ENCODE measurements at regions of chr5 and their contacts with region 1.

Region 1: DNA sequence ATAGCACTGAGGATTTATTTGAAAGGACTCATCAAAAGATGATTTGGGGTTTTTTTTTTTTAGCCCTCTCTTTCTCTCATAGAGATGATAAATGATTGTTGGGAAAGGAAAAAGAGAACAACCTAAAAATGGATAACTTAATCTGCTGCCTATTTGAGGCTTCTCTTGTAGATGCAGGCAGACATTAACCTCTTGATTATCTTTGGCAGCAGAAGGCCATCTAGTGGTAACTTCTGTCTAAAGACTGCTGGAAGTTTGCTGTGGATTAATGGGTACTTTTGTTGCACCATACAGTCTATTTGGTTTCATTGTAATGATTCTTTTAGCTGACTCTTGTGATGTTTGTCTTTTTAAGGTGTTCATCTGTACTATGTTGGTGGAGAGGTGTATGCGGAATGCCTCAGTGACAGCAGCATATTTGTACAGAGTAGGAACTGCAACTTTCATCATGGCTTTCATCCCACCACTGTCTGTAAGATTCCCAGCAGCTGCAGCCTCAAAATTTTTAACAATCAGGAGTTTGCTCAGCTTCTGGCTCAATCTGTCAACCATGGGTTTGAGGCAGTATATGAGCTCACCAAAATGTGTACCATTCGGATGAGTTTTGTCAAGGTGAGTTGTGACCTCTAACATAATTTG is 18.8 kb downstream of the SMIM32 start:
- DNase-seq: peak; percentile 12
- ATAC-seq: peak; percentile 88
- H3K4me3 ChIP-seq: no peak overlapping the region
- H3K27ac ChIP-seq: no peak overlapping the region
- H3K4me1 ChIP-seq: no peaks in the 10 kb centered on the region
- H3K27me3 ChIP-seq: no peaks in the 10 kb centered on the region
- CTCF ChIP-seq: peak; percentile 67 to 74 (median 70)
- EP300 ChIP-seq: no peak
- POLR2A ChIP-seq: no peak
- RAD21 ChIP-seq: peak; percentile 81

Region 2: GRCh38 chr5:135591277-135591676 is 582.9 kb before region 1 on chr5:
- CTCF ChIA-PET with region 1: no interaction called
- POLR2A ChIA-PET with region 1: no interaction called
- RAD21 ChIA-PET with region 1: no interaction called
- SMC1A ChIA-PET with region 1: no interaction called
- in situ Hi-C with region 1: no loop called
- intact Hi-C with region 1: no loop called
- DNase-seq: no peak
- ATAC-seq: no peak
- H3K4me3 ChIP-seq: no peak overlapping the region
- H3K27ac ChIP-seq: no peak overlapping the region
- H3K4me1 ChIP-seq: 0 out of 2 replicates have a peak, but pooled peaks cover 3% of the 10 kb centered on the region
- H3K27me3 ChIP-seq: peaks cover 2 to 6% of the 10 kb centered on the region in 2 experiments; a peak in 3 of 4 replicates
- CTCF ChIP-seq: no peak
- EP300 ChIP-seq: no peak
- POLR2A ChIP-seq: no peak
- RAD21 ChIP-seq: no peak

Region 3: GRCh38 chr5:135887351-135887864 is 286.7 kb before region 1 on chr5:
- CTCF ChIA-PET with region 1: interaction called, 5 read pairs
- POLR2A ChIA-PET with region 1: no interaction called
- RAD21 ChIA-PET with region 1: no interaction called
- SMC1A ChIA-PET with region 1: no interaction called
- in situ Hi-C with region 1: no loop called
- intact Hi-C with region 1: loop called (anchors 2 kb)
- DNase-seq: peak; percentile 25
- ATAC-seq: peak; percentile 98
- H3K4me3 ChIP-seq: no peak overlapping the region
- H3K27ac ChIP-seq: no peak overlapping the region
- H3K4me1 ChIP-seq: no peaks in the 10 kb centered on the region
- H3K27me3 ChIP-seq: no peaks in the 10 kb centered on the region
- CTCF ChIP-seq: peak; percentile 72 to 78 (median 74)
- EP300 ChIP-seq: no peak
- POLR2A ChIP-seq: no peak
- RAD21 ChIP-seq: peak; percentile 85

Region 4: GRCh38 chr5:135944967-135945560 is 229.1 kb before region 1 on chr5:
- CTCF ChIA-PET with region 1: interaction called, 6 read pairs
- POLR2A ChIA-PET with region 1: no interaction called
- RAD21 ChIA-PET with region 1: interaction called, 4 read pairs
- SMC1A ChIA-PET with region 1: interaction called, 5 read pairs
- in situ Hi-C with region 1: no loop called
- intact Hi-C with region 1: loop called (anchors 2 kb)
- DNase-seq: no peak
- ATAC-seq: peak; percentile 70
- H3K4me3 ChIP-seq: no peak overlapping the region
- H3K27ac ChIP-seq: no peak overlapping the region
- H3K4me1 ChIP-seq: no peaks in the 10 kb centered on the region
- H3K27me3 ChIP-seq: no peaks in the 10 kb centered on the region; a peak in 2 of 4 replicates
- CTCF ChIP-seq: peak; percentile 60 to 77 (median 66)
- EP300 ChIP-seq: no peak
- POLR2A ChIP-seq: no peak
- RAD21 ChIP-seq: peak; percentile 74

Region 5: DNA sequence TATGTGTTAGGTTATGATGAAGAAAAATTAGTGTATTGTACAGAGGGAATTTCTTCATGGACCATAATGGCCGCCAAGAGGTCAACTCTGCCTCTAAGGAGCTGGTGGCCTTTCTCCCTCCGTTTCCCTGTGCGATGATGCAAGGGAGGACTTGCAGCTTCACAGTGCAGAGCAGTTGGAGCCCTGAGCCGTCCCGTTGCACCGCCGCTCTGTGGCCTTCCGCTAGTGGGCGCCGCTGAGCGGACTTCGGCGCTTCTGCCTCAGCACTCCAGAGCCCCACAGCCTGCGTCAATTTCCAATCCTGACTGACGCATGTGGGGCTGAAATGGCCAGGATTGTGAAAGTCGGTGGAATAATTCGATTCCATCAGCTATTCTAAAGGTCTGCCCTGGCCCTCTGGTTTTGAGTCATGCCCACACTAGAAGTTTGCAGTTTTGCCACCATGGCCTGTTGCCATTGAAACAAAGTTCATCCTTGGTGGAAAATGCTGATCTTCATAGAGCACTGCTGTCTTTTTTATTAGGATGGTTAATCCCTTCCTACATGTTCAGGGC is 196.7 kb before region 1 on chr5:
- CTCF ChIA-PET with region 1: interaction called, 13 read pairs
- POLR2A ChIA-PET with region 1: no interaction called
- RAD21 ChIA-PET with region 1: interaction called, 3 read pairs
- SMC1A ChIA-PET with region 1: interaction called, 3 read pairs
- in situ Hi-C with region 1: no loop called
- intact Hi-C with region 1: loop called (anchors 10 kb)
- DNase-seq: no peak
- ATAC-seq: peak; percentile 99
- H3K4me3 ChIP-seq: no peak overlapping the region
- H3K27ac ChIP-seq: no peak overlapping the region
- H3K4me1 ChIP-seq: no peaks in the 10 kb centered on the region
- H3K27me3 ChIP-seq: peaks cover 0 to 3% of the 10 kb centered on the region in 2 experiments; a peak in 2 of 4 replicates
- CTCF ChIP-seq: peak; percentile 71 to 94 (median 88)
- EP300 ChIP-seq: no peak
- POLR2A ChIP-seq: no peak
- RAD21 ChIP-seq: peak; percentile 58

Region 6: GRCh38 chr5:136073714-136074529 is 100.2 kb before region 1 on chr5:
- CTCF ChIA-PET with region 1: interaction called, 64 read pairs
- POLR2A ChIA-PET with region 1: no interaction called
- RAD21 ChIA-PET with region 1: interaction called, 5 read pairs
- SMC1A ChIA-PET with region 1: interaction called, 5 read pairs
- in situ Hi-C with region 1: no loop called
- intact Hi-C with region 1: no loop called
- DNase-seq: no peak
- ATAC-seq: peak; percentile 86
- H3K4me3 ChIP-seq: no peak overlapping the region
- H3K27ac ChIP-seq: no peak overlapping the region
- H3K4me1 ChIP-seq: no peaks in the 10 kb centered on the region; the same call in 1 of the 2 replicates
- H3K27me3 ChIP-seq: no peaks in the 10 kb centered on the region; a peak in 1 of 4 replicates
- CTCF ChIP-seq: no peak
- EP300 ChIP-seq: 0 out of 4 replicates have a peak, but pooled peaks of 1 of the 2 experiments have one; percentile 44
- POLR2A ChIP-seq: no peak
- RAD21 ChIP-seq: no peak

Region 7: DNA sequence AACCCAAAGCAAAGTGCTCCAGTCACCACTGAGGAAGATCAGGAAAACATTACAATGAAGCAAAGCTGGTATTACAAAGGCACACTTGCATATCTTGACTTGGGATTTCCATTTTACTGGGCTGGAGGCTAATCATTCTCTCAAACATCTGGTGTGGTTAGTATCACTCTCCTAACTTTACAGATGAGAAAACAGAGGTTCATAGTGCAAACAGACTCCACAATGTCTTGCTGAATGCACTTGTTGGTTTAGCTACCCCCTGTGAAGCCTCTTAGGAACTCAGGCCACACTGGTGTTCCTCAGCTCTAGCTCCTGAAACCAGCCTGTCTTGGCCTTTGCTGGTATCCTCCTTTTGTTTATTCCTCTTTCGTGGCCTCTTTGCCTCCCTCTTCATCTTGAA is 71.0 kb before region 1 on chr5:
- CTCF ChIA-PET with region 1: interaction called, 4 read pairs
- POLR2A ChIA-PET with region 1: no interaction called
- RAD21 ChIA-PET with region 1: interaction called, 3 read pairs
- SMC1A ChIA-PET with region 1: interaction called, 10 read pairs
- in situ Hi-C with region 1: no loop called
- intact Hi-C with region 1: no loop called
- DNase-seq: no peak
- ATAC-seq: peak; percentile 72
- H3K4me3 ChIP-seq: no peak overlapping the region
- H3K27ac ChIP-seq: no peak overlapping the region
- H3K4me1 ChIP-seq: no peaks in the 10 kb centered on the region
- H3K27me3 ChIP-seq: no peaks in the 10 kb centered on the region
- CTCF ChIP-seq: no peak
- EP300 ChIP-seq: no peak
- POLR2A ChIP-seq: no peak
- RAD21 ChIP-seq: no peak